Activated naive CD8-positive, alpha-beta T cell treated with anti-CD3 and anti-CD28 coated beads, Interleukin-2, amount 10 ng/mL, durations not matched to agents 7 days and 5 days (primary cell): ENCODE measurements at regions of chr19 and their contacts with region 1.

Region 1: GRCh38 chr19:20923077-20923871 is at the start of gene ZNF85:
- DNase-seq: peak; percentile 85
- ATAC-seq: peak; percentile 99
- H3K4me3 Mint-ChIP-seq: peak within 1 kb of the TSS; percentile 97
- H3K27ac Mint-ChIP-seq: peak within 1 kb of the TSS; percentile 99
- H3K4me1 Mint-ChIP-seq: peaks cover 13% of the 10 kb centered on the region
- H3K27me3 Mint-ChIP-seq: no peaks in the 10 kb centered on the region
- total RNA-seq, gene ZNF85: 22.7 to 25.0 TPM

Region 2: DNA sequence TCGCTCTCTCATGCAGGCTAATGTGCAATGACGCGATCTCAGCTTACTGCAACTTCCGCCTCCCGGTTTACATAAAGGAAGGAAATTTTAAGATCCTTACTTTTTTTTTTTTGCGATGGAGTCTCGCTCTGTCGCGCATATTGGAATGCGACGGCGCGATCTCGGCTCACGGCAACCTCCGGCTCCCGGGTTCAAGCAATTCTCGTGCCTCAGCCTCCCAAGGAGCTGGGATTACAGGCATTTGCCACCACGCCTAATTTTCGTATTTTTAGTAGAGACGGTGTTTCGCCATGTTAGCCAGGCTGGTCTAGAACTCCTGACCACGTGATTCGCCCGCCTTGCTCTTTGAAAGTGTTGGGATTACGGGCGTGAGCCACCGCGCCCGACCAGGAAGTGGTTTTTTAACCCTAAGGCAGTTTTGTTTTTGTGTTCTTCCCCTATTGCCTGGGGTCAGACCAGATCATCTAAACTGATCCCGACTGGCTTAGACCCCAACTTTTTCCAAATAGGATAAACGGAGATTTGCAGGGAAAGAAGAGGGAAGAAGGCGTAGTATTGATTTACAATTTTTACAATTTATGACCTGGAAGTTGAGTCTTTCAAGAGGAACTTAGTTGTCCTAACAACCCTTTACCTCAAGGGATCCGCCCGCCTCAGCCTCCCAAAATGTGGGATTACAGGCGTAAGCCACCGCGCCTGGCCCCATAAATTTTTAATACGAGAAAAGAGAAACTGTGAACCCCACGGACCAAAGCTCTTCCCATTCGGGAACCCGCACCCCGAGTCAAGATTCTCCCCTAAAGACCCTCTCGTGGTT is 499.7 kb before region 1 on chr19:
- POLR2A ChIA-PET with region 1: interaction called, 13 read pairs
- DNase-seq: peak; percentile 52
- ATAC-seq: no peak
- H3K4me3 Mint-ChIP-seq: peak overlapping the region; percentile 96
- H3K27ac Mint-ChIP-seq: peak overlapping the region; percentile 98
- H3K4me1 Mint-ChIP-seq: peaks cover 8% of the 10 kb centered on the region
- H3K27me3 Mint-ChIP-seq: no peaks in the 10 kb centered on the region

Region 3: DNA sequence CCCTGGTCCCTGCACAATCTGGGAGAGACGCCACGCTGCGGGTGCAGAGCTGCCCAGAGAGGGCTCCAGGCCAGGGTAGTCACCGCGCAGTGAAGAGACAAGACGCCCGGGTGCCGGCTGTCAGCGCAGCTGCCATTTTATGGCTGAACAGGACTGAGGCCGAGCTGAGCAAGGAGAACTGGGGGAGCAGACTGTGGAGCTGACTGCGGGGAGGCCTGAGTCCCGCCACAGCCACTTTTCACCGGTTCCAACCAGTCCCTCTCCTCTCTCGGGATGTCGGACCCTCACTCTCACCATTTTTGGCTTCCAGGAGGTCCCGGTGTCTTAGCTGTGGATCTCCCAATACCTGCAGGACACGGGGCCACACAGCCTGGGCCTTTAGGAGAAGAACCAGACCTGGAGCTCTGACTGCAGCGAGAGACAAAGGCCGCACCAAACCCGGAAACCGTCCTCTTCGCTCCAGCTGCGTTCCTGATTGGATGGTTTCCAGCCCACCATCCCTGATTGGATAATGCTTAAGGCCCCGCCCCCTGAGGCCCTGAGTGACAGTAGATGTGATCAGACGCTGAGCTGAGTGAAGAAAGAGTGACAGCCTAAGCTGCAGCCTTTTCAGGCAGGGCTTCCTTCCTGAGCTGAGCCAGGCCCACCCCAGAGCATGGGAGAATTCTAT is 262.0 kb before region 1 on chr19 and contains the start of gene ZNF626:
- POLR2A ChIA-PET with region 1: interaction called, 13 read pairs
- DNase-seq: peak; percentile 85
- ATAC-seq: peak; percentile 99
- H3K4me3 Mint-ChIP-seq: peak within 1 kb of the TSS; percentile 94
- H3K27ac Mint-ChIP-seq: peak within 1 kb of the TSS; percentile 98
- H3K4me1 Mint-ChIP-seq: peaks cover 10% of the 10 kb centered on the region
- H3K27me3 Mint-ChIP-seq: no peaks in the 10 kb centered on the region
- total RNA-seq, gene ZNF626: 13.6 to 17.8 TPM

Region 4: DNA sequence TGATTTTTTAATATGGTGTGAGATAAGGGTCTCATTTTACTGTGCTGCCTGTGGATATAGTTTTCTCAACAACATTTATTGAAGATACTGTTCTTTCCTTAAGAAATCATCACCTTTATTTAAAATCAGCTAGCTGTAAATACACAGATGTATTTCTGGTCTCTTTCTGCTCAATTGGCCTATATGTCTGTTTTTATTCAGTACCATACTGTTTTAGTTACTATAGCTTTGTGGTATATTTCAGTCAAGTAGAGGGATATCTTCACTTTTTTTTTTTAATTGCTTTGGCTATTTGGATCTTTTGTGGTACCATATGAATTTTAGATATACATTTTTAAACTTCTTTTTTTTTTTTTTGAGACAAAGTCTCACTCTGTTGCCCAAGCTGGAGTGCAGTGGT is 142.1 kb after region 1 on chr19:
- POLR2A ChIA-PET with region 1: no interaction called
- DNase-seq: no peak
- ATAC-seq: no peak
- H3K4me3 Mint-ChIP-seq: no peak overlapping the region
- H3K27ac Mint-ChIP-seq: no peak overlapping the region
- H3K4me1 Mint-ChIP-seq: no peaks in the 10 kb centered on the region
- H3K27me3 Mint-ChIP-seq: no peaks in the 10 kb centered on the region